Dorsolateral prefrontal cortex (tissue), 120 donors: ENCODE measurements at regions of chr12 and their contacts with region 1.

Region 1: DNA sequence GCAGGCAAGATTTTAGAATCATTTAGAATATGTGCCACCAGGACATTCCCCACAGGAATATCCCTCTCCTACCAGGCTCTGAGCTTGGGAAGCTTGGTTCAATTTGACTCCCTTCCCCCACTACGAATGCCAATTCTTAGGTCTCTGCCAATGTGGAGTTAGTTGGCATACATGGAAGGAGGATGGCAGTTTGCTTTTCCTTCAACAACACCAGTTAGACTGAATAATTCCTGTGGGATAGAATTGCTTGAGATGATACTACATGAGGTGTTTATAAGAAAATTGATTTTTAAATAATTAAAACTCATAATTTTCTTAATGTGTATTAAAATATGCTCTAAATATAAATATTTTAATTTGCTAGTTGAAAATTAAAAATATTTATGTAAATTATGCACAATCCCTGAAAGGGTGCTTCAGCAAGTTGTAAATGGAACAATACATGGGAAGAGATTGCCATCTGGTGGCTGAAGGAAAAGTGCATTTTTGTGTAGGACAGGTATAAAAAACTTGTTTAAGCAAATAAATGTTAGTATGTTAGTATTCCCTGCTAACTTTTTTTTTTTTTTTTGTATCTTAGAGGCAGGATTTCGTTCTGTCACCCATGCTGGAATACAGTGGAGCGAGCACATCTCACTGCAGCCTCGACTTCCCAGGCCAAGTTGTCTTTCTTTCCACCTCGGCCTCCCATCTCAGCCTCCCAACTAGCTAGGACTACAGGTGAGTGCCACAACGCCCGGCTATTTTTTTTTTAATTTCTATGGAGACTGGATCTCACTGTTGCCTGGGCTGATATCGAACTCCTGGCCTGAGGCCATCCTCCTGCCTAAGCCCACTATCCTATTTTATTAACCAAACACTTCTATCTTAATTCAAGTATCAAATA is 25.8 kb upstream of the STRAP start:
- DNase-seq: peak in 3 of 10 donors; percentile 7 to 60 (median 52)
- H3K4me3 ChIP-seq: no peak overlapping the region
- H3K27ac ChIP-seq: no peak overlapping the region
- H3K27me3 ChIP-seq: no peaks in the 10 kb centered on the region
- CTCF ChIP-seq: peak; percentile 73 to 98 (median 92)

Region 2: DNA sequence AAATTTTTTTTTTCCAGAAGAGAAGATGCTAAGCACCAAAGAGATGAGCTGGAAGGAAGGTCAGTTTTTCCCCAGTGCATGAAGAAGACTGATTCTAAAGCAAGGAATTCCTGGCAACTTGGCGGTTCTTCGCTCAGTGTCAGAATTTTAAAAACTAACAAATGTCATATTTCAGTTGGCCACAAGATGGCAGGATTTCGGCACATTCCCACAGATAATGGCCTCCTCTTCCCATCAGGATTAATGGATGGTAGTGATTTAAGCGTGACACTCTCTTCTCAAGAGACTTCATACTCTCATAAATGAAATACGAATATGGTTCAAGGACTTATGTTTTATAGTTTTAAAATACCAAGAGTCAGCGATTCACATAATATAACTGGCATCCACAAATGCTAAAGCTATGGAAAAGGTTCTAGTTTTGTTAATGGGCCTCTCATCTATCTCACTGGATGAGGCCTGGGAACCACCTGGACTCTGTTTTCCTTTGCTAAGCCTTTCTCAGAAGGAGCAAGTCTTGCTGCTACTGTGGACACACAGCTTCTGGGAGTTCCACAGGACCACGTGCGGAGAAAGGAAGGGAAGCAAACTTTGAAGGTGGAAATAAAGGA is 580.1 kb before region 1 on chr12:
- intact Hi-C with region 1: loop called (anchors 10 kb)
- DNase-seq: peak in 2 of 10 donors; percentile 18 to 21
- H3K4me3 ChIP-seq: no peak overlapping the region
- H3K27ac ChIP-seq: no peak overlapping the region
- H3K27me3 ChIP-seq: no peaks in the 10 kb centered on the region
- CTCF ChIP-seq: peak; percentile 72 to 97 (median 87)

Region 3: GRCh38 chr12:15532364-15532977 is 323.9 kb before region 1 on chr12:
- intact Hi-C with region 1: loop called in 1 of 2 experiments (anchors 5 kb)
- DNase-seq: no peak
- H3K4me3 ChIP-seq: no peak overlapping the region
- H3K27ac ChIP-seq: no peak overlapping the region
- H3K27me3 ChIP-seq: no peaks in the 10 kb centered on the region
- CTCF ChIP-seq: peak in 54 of 56 donors; percentile 23 to 75 (median 52)

Region 4: GRCh38 chr12:15590180-15590826 is 266.0 kb before region 1 on chr12:
- intact Hi-C with region 1: loop called (anchors 1 to 2 kb)
- DNase-seq: peak in 9 of 10 donors; percentile 46 to 73 (median 56)
- H3K4me3 ChIP-seq: peak overlapping the region in 58 of 59 donors; percentile 12 to 69 (median 44)
- H3K27ac ChIP-seq: peak overlapping the region in 35 of 59 donors; percentile 3 to 71 (median 34)
- H3K27me3 ChIP-seq: no peaks in the 10 kb centered on the region
- CTCF ChIP-seq: peak; percentile 70 to 99 (median 94)

Region 5: GRCh38 chr12:15772405-15773018 is 83.8 kb before region 1 on chr12:
- intact Hi-C with region 1: loop called in 1 of 2 experiments (anchors 5 kb)
- DNase-seq: no peak
- H3K4me3 ChIP-seq: no peak overlapping the region
- H3K27ac ChIP-seq: peak overlapping the region in 7 of 59 donors; percentile 7 to 62 (median 44)
- H3K27me3 ChIP-seq: no peaks in the 10 kb centered on the region
- CTCF ChIP-seq: peak in 50 of 56 donors; percentile 11 to 64 (median 44)

Region 6: DNA sequence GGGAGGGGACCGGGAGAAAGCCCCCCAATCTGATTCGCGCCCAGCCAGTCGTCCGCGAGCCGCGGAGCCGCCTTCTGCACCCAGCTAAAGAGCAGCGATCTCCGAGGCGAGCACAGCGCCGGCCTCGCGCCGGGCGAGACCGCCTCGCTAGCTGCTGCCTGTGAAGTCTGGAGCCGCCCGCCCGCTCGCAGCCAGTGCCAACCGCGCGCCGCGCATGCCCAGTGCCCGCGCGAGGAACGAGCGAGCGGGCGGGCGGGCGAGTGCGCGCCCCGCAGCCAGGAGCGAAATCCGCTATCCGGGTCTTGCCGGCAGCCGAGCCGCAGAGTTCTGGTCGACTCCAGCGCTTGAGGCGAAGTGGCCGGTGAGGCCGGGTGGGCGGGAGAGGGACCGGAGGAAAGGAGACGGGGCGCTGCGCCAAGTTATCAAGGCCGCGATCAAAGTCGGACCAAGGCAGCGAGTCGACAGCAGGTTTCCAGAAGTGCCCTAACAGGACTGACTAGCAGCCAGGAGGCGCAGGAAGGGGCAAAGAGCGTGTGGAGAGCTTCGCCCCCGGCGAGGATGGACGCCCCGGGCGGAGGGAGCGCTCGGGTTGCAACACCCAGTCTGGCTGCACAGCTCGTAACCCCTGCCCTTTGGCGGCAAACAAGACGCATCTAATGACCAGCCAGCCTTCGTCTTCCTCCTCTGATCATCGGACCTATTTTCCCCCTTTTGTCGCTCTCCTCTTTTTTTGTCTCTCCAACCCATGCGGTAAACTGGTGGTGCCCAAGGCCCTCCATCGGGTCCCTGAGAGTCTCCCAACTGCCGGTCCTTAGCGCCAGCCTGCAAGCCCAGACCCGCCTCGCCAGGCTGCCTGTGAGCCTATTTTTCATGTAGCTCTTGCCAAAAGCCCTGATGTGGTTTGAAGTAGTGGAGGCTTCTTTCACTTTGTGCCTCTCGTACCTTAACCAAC is 66.8 kb before region 1 on chr12 and contains the start of gene EPS8:
- intact Hi-C with region 1: loop called in 1 of 2 experiments (anchors 10 kb)
- DNase-seq: peak; percentile 83 to 94 (median 88)
- H3K4me3 ChIP-seq: peak within 1 kb of the TSS; percentile 64 to 95 (median 84)
- H3K27ac ChIP-seq: peak within 1 kb of the TSS; percentile 73 to 97 (median 90)
- H3K27me3 ChIP-seq: no peaks in the 10 kb centered on the region
- CTCF ChIP-seq: peak in 36 of 56 donors; percentile 5 to 58 (median 28)
- total RNA-seq, gene EPS8: 15.8 to 61.8 (median 29.0) TPM

Region 7: GRCh38 chr12:16586350-16587109 is 730.2 kb after region 1 on chr12:
- intact Hi-C with region 1: no loop called
- DNase-seq: peak in 1 of 10 donors; percentile 35
- H3K4me3 ChIP-seq: peak overlapping the region in 22 of 59 donors; percentile 3 to 40 (median 14)
- H3K27ac ChIP-seq: peak overlapping the region in 56 of 59 donors; percentile 14 to 90 (median 76)
- H3K27me3 ChIP-seq: no peaks in the 10 kb centered on the region
- CTCF ChIP-seq: no peak